Heart left ventricle (tissue), 16 donors: ENCODE measurements at regions of chr17 and their contacts with region 1.

Region 1: GRCh38 chr17:29032857-29033197 is 10.1 kb upstream of the PIPOX start:
- DNase-seq: no peak
- ATAC-seq: no peak
- H3K4me3 ChIP-seq: no peak overlapping the region
- H3K27ac ChIP-seq: no peak overlapping the region
- H3K4me1 ChIP-seq: no peaks in the 10 kb centered on the region
- H3K27me3 ChIP-seq: peaks cover 0 to 44% (median 15%) of the 10 kb centered on the region in 9 donors
- CTCF ChIP-seq: no peak
- POLR2A ChIP-seq: no peak

Region 2: DNA sequence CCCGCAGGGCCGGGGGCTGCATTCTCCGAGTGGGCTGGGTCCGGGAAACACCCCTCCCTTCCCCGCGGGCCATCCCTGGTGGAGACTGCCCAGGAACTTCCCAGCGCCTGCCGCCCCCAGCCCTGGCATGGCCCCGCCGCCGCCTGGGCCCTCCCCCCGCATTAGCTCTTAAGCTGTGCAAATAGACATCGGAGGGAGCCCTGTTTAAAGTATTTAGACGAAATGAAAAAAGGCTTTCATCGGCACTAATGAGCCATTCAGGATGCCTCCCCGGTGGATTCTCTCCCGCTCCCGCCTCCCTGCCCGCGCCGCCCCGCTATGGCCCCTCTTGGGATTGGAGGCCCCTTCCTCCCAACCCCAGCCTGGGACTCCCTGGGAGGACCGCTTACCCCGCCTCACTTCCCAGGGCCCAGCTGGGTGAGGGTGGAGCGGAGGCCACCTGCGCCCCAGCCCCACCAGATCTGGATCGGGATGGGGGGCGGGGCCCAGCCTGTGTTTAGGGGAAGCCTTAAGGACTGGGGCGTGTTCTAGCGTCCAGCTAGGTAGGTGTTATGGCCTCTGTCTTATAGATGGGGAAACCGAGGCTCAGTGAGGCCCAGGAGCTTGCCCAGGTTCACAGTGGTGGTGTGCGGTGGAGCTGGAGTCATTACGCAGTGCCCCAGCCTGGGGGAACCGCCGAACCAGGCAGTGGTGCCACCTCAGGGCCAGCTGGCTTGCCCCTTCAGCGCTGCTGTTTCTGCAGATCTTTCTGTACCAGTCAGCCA is 46.7 kb before region 1 on chr17:
- intact Hi-C with region 1: loop called in 1 of 10 experiments (anchors 5 kb)
- DNase-seq: no peak
- ATAC-seq: no peak
- H3K4me3 ChIP-seq: no peak overlapping the region
- H3K27ac ChIP-seq: no peak overlapping the region
- H3K4me1 ChIP-seq: peaks cover 0 to 26% (median 14%) of the 10 kb centered on the region in 12 donors
- H3K27me3 ChIP-seq: peaks cover 0 to 13% (median 0%) of the 10 kb centered on the region in 9 donors
- CTCF ChIP-seq: no peak
- POLR2A ChIP-seq: no peak